ENCODE measurements at regions of chr4 and their contacts with region 1.

Region 1: GRCh38 chr4:139083956-139084803 is 68.6 kb downstream of the NOCT start:
- DNase-seq: peak; percentile 70 to 90 (median 83)
- H3K4me3 ChIP-seq: peak overlapping the region; percentile 98
- H3K4me3 Mint-ChIP-seq: peak overlapping the region; percentile 87 to 100 (median 92)
- H3K27ac ChIP-seq: peak overlapping the region; percentile 94
- H3K27ac Mint-ChIP-seq: peak overlapping the region; percentile 88 to 100 (median 98)
- H3K4me1 ChIP-seq: peaks cover 31% of the 10 kb centered on the region
- H3K4me1 Mint-ChIP-seq: peaks cover 38 to 52% (median 46%) of the 10 kb centered on the region in 3 donors
- H3K27me3 ChIP-seq: no peaks in the 10 kb centered on the region
- H3K27me3 Mint-ChIP-seq: peaks cover 0 to 4% of the 10 kb centered on the region in 2 donors

Region 2: GRCh38 chr4:139177868-139178611 is 93.9 kb after region 1 on chr4:
- CTCF ChIA-PET with region 1: no interaction called
- POLR2A ChIA-PET with region 1: interaction called, 10 read pairs
- DNase-seq: peak; percentile 81 to 90 (median 89)
- H3K4me3 ChIP-seq: peak overlapping the region; percentile 96
- H3K4me3 Mint-ChIP-seq: peak overlapping the region; percentile 89 to 97 (median 92)
- H3K27ac ChIP-seq: peak overlapping the region; percentile 87
- H3K27ac Mint-ChIP-seq: peak overlapping the region; percentile 84 to 98 (median 94)
- H3K4me1 ChIP-seq: peaks cover 10% of the 10 kb centered on the region
- H3K4me1 Mint-ChIP-seq: peaks cover 21 to 28% (median 27%) of the 10 kb centered on the region in 3 donors
- H3K27me3 ChIP-seq: no peaks in the 10 kb centered on the region
- H3K27me3 Mint-ChIP-seq: no peaks in the 10 kb centered on the region